ENCODE measurements at regions of chr7 and their contacts with region 1.

Region 1: GRCh38 chr7:148262721-148263229 is 327.8 kb upstream of the C7orf33 start:
- DNase-seq: peak; percentile 79
- ATAC-seq: peak; percentile 90
- H3K4me3 ChIP-seq: peak overlapping the region in 2 of 5 experiments; percentile 28 to 47
- H3K4me3 Mint-ChIP-seq: peak overlapping the region; percentile 68
- H3K27ac ChIP-seq: no peak overlapping the region
- H3K27ac Mint-ChIP-seq: no peak overlapping the region
- H3K4me1 ChIP-seq: peaks cover 16 to 27% of the 10 kb centered on the region in 2 donors
- H3K4me1 Mint-ChIP-seq: peaks cover 29% of the 10 kb centered on the region
- H3K27me3 ChIP-seq: peaks cover 0 to 5% (median 0%) of the 10 kb centered on the region in 4 experiments
- H3K27me3 Mint-ChIP-seq: peaks cover 12% of the 10 kb centered on the region
- CTCF ChIP-seq: peak; percentile 97

Region 2: GRCh38 chr7:147756300-147756699 is 506.5 kb before region 1 on chr7:
- CTCF ChIA-PET with region 1: no interaction called
- POLR2A ChIA-PET with region 1: no interaction called
- intact Hi-C with region 1: no loop called
- DNase-seq: no peak
- ATAC-seq: no peak
- H3K4me3 ChIP-seq: no peak overlapping the region
- H3K4me3 Mint-ChIP-seq: no peak overlapping the region
- H3K27ac ChIP-seq: no peak overlapping the region
- H3K27ac Mint-ChIP-seq: no peak overlapping the region
- H3K4me1 ChIP-seq: no peaks in the 10 kb centered on the region
- H3K4me1 Mint-ChIP-seq: no peaks in the 10 kb centered on the region
- H3K27me3 ChIP-seq: no peaks in the 10 kb centered on the region
- H3K27me3 Mint-ChIP-seq: no peaks in the 10 kb centered on the region
- CTCF ChIP-seq: no peak

Region 3: GRCh38 chr7:148242294-148242801 is 20.4 kb before region 1 on chr7:
- CTCF ChIA-PET with region 1: interaction called, 64 read pairs
- POLR2A ChIA-PET with region 1: no interaction called
- intact Hi-C with region 1: no loop called
- DNase-seq: peak; percentile 45
- ATAC-seq: peak; percentile 28
- H3K4me3 ChIP-seq: no peak overlapping the region
- H3K4me3 Mint-ChIP-seq: no peak overlapping the region
- H3K27ac ChIP-seq: no peak overlapping the region
- H3K27ac Mint-ChIP-seq: no peak overlapping the region
- H3K4me1 ChIP-seq: peaks cover 3 to 4% of the 10 kb centered on the region in 2 donors
- H3K4me1 Mint-ChIP-seq: peaks cover 5% of the 10 kb centered on the region
- H3K27me3 ChIP-seq: peaks cover 0 to 20% (median 14%) of the 10 kb centered on the region in 4 experiments
- H3K27me3 Mint-ChIP-seq: peaks cover 43% of the 10 kb centered on the region
- CTCF ChIP-seq: peak; percentile 82

Region 4: DNA sequence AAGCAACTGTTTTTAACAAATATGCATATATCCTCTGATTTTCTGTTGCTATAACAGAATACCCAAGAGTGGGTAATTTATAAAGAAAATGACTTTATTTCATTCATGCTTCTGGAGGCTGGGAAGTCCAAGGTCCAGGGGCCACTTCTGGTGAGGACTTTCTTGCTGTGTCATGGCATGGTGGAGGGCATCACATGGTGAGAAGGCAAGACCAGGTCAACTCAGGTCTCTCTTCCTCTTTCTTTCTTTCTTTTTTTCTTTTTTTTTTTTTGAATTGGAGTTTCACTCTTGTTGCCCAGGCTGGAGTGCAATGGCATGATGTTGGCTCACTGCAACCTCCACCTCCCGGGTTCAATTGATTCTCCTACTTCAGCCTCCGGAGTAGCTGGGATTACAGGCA is 24.8 kb after region 1 on chr7:
- CTCF ChIA-PET with region 1: interaction called, 11 read pairs
- POLR2A ChIA-PET with region 1: no interaction called
- intact Hi-C with region 1: no loop called
- DNase-seq: no peak
- ATAC-seq: no peak
- H3K4me3 ChIP-seq: no peak overlapping the region
- H3K4me3 Mint-ChIP-seq: no peak overlapping the region
- H3K27ac ChIP-seq: no peak overlapping the region
- H3K27ac Mint-ChIP-seq: no peak overlapping the region
- H3K4me1 ChIP-seq: peaks cover 24 to 41% of the 10 kb centered on the region in 2 donors
- H3K4me1 Mint-ChIP-seq: peaks cover 45% of the 10 kb centered on the region
- H3K27me3 ChIP-seq: no peaks in the 10 kb centered on the region
- H3K27me3 Mint-ChIP-seq: no peaks in the 10 kb centered on the region
- CTCF ChIP-seq: no peak

Region 5: GRCh38 chr7:148334959-148335577 is 72.3 kb after region 1 on chr7:
- CTCF ChIA-PET with region 1: interaction called, 8 read pairs
- POLR2A ChIA-PET with region 1: no interaction called
- intact Hi-C with region 1: loop called (anchors 5 kb)
- DNase-seq: no peak
- ATAC-seq: no peak
- H3K4me3 ChIP-seq: no peak overlapping the region
- H3K4me3 Mint-ChIP-seq: no peak overlapping the region
- H3K27ac ChIP-seq: no peak overlapping the region
- H3K27ac Mint-ChIP-seq: no peak overlapping the region
- H3K4me1 ChIP-seq: peaks cover 15 to 16% of the 10 kb centered on the region in 2 donors
- H3K4me1 Mint-ChIP-seq: peaks cover 18% of the 10 kb centered on the region
- H3K27me3 ChIP-seq: peaks cover 0 to 23% (median 9%) of the 10 kb centered on the region in 4 experiments
- H3K27me3 Mint-ChIP-seq: peaks cover 20% of the 10 kb centered on the region
- CTCF ChIP-seq: no peak

Region 6: DNA sequence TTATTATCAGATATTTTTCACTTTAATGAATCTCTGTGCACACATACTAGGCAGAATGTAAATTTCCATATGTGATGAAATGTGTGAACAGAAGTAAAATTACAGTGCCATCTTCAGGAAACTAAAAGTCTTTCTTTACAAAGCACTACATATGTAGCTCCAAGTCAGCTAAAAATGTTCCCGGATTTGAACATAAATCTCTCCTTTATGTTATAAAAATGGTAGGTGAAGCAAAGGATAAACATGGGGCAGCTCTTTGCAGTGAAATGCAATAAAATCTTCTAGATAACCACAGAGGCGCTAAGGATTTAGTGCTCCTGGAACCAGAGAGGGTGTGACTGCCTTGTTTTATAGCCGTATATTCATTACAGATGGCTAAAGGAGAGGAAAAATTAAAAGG is 222.8 kb after region 1 on chr7:
- CTCF ChIA-PET with region 1: interaction called, 105 read pairs
- POLR2A ChIA-PET with region 1: no interaction called
- intact Hi-C with region 1: loop called (anchors 1 kb)
- DNase-seq: peak; percentile 18
- ATAC-seq: no peak
- H3K4me3 ChIP-seq: no peak overlapping the region
- H3K4me3 Mint-ChIP-seq: no peak overlapping the region
- H3K27ac ChIP-seq: no peak overlapping the region
- H3K27ac Mint-ChIP-seq: no peak overlapping the region
- H3K4me1 ChIP-seq: peaks cover 0 to 5% of the 10 kb centered on the region in 2 donors
- H3K4me1 Mint-ChIP-seq: peaks cover 18% of the 10 kb centered on the region
- H3K27me3 ChIP-seq: peaks cover 0 to 4% (median 0%) of the 10 kb centered on the region in 4 experiments
- H3K27me3 Mint-ChIP-seq: peaks cover 6% of the 10 kb centered on the region
- CTCF ChIP-seq: no peak

Region 7: DNA sequence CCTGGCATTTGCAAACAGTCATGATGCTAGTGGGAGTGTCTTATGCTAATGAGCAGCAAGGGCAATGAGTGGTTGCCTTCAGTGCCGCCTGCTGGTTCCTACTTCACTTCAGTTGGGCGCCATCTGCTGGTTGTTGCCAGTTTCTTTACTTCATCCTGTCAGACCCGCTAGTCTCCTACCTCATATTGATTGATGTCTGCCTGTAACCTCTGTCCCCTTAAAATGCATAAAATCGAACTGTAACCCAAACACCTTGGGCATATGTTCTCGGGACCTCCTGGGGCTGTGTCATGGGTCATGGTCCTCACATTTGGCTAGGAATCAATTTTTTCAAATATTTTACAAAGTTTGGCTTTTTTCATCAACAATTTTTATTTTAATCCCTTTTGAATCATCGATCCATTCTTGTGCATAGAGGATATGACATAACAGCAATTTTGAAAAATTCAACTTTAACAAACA is 265.0 kb after region 1 on chr7:
- CTCF ChIA-PET with region 1: interaction called, 47 read pairs
- POLR2A ChIA-PET with region 1: no interaction called
- intact Hi-C with region 1: no loop called
- DNase-seq: peak; percentile 90
- ATAC-seq: peak; percentile 97
- H3K4me3 ChIP-seq: no peak overlapping the region
- H3K4me3 Mint-ChIP-seq: no peak overlapping the region
- H3K27ac ChIP-seq: no peak overlapping the region
- H3K27ac Mint-ChIP-seq: no peak overlapping the region
- H3K4me1 ChIP-seq: no peaks in the 10 kb centered on the region
- H3K4me1 Mint-ChIP-seq: peaks cover 14% of the 10 kb centered on the region
- H3K27me3 ChIP-seq: no peaks in the 10 kb centered on the region
- H3K27me3 Mint-ChIP-seq: no peaks in the 10 kb centered on the region
- CTCF ChIP-seq: peak; percentile 86